BJ (cell line): ENCODE measurements at regions of chr4 and their contacts with region 1.

Region 1: GRCh38 chr4:158873795-158874401 is 105.1 kb downstream of the FNIP2 start:
- DNase-seq: peak; percentile 56
- H3K4me3 ChIP-seq: no peak overlapping the region
- H3K27me3 ChIP-seq: no peaks in the 10 kb centered on the region
- CTCF ChIP-seq: no peak

Region 2: DNA sequence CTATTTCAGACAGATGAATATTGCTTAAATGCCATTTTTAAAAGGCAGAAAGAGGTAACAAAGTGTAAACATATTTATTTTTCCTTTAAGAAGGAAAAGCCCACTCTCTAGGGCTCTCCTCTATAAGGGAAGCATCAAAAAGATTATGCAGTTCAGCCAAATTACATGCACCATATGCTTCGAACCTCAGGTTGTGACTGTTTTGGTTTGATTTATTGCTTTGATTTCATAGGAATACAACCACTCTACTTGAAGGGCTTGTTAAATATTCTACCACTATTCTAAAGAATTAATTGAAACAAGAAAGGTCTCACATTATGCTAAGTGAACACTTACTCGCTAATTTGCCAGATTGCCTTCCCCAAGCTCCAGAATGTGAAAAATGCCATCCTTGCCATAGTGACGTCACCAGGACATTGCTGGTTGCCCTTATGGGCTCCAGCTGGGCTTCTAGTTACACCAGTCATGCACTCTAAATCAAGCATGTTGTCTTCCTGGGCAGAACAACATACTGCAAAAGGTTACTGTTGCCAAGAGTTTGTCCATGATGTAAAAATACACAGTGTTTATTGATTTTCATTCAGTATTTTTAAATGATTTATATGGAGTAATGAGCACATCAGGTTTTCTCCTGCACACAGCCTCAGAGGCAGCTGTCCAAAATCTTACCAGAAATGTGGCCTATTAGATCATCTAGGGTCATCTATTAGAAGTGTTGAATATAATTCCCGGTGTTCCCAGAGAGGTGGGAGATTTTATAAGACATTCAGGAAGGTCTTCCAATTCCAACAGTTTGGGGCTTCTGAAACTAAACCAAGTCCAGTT is 64.5 kb after region 1 on chr4:
- CTCF ChIA-PET with region 1: no interaction called
- POLR2A ChIA-PET with region 1: no interaction called
- DNase-seq: no peak
- H3K4me3 ChIP-seq: no peak overlapping the region
- H3K27me3 ChIP-seq: no peaks in the 10 kb centered on the region
- CTCF ChIP-seq: no peak

Region 3: GRCh38 chr4:159141193-159141592 is 267.3 kb after region 1 on chr4:
- CTCF ChIA-PET with region 1: interaction called, 3 read pairs
- POLR2A ChIA-PET with region 1: interaction called, 11 read pairs
- DNase-seq: no peak
- H3K4me3 ChIP-seq: no peak overlapping the region
- H3K27me3 ChIP-seq: no peaks in the 10 kb centered on the region
- CTCF ChIP-seq: no peak